Endothelial cell of umbilical vein (primary cell): ENCODE measurements at regions of chr20 and their contacts with region 1.

Region 1: DNA sequence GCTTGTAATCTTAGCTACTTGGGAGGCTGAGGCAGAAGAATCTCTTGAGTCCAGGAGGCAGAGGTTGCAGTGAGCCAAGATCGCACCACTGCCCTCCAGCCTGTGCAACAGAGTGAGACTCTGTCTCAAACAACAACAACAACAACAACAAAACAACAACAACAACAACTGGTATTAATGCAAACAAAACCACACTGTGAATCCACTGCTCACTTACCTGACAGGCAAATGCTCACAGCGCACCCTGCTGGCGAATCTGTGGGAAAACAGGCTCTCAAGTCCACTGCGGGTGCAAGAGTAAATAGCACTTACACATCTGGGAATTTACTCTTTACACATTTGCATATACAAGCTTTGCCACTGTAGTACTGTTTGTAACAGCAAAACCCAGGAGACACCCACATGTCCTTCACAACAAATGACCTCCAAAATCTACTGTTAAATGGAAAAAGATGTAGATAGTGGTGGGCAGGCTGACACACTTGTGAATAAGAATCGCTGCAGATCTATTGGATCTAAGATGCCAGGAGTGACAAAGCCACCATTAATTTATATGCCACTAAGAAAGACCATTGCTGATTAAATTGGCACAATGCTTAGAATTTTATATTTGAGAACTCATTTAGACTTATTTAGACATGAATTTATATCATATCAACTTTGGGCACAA is 29.3 kb downstream of the NSFL1C start:
- DNase-seq: peak; percentile 80
- H3K4me3 ChIP-seq: no peak overlapping the region
- H3K27ac ChIP-seq: no peak overlapping the region
- H3K4me1 ChIP-seq: peaks cover 18% of the 10 kb centered on the region
- H3K27me3 ChIP-seq: no peaks in the 10 kb centered on the region
- CTCF ChIP-seq: peak; percentile 82 to 85
- POLR2A ChIP-seq: no peak

Region 2: GRCh38 chr20:1062334-1063010 is 374.9 kb before region 1 on chr20:
- CTCF ChIA-PET with region 1: no interaction called
- POLR2A ChIA-PET with region 1: no interaction called
- dilution Hi-C with region 1: no loop called
- intact Hi-C with region 1: no loop called
- DNase-seq: no peak
- H3K4me3 ChIP-seq: no peak overlapping the region
- H3K27ac ChIP-seq: no peak overlapping the region
- H3K4me1 ChIP-seq: no peaks in the 10 kb centered on the region
- H3K27me3 ChIP-seq: peaks cover 2 to 3% of the 10 kb centered on the region in 2 experiments
- CTCF ChIP-seq: no peak
- POLR2A ChIP-seq: no peak

Region 3: DNA sequence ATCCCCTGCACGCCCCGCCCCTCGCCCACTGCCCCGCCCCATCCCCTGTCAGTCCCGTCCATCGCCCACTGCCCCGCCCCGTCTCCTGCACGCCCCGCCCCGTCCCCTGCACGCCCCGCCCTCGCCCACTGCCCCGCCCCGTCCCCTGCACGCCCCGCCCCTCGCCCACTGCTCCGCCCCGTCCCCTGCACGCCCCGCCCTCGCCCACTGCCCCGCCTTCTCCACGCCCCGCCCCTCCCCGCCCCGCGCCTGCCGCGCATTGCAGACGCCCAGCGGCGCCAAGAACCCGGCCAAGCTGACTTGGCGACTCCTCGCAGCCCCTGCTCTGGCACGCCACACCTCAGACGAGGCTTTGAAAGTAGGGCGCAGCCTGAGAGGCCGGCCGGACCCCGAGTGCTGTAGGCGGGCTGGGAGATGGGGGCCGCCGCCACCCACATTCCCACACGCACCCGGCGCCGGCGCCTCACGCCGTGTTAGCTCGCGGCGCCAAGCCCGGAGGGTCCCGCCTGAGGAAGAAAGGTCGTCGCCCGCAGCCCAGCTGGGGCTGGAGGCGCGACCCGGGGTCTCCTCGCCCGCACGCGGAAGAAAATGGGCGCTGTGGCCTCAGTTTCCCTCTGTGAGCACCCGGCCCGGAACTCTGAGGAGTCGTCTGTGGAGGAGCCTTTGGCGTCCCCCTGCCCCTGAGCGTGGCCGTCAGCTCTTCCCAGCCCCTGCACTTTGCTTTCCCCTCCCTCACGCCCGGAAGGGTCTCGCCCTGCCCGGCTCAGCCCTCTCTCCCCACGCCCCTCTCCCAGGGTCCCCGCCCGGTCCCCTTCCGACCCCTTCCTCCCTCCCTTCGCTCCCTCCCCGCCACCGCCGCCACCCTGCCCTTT is 211.4 kb before region 1 on chr20 and contains the start of gene RAD21L1:
- CTCF ChIA-PET with region 1: interaction called, 4 read pairs
- POLR2A ChIA-PET with region 1: no interaction called
- dilution Hi-C with region 1: no loop called
- intact Hi-C with region 1: loop called (anchors 1 kb)
- DNase-seq: peak; percentile 50
- H3K4me3 ChIP-seq: peak within 1 kb of the TSS; percentile 70 to 90 (median 71)
- H3K27ac ChIP-seq: peak within 1 kb of the TSS; percentile 70
- H3K4me1 ChIP-seq: peaks cover 6% of the 10 kb centered on the region
- H3K27me3 ChIP-seq: peaks cover 0 to 23% of the 10 kb centered on the region in 2 experiments
- CTCF ChIP-seq: no peak
- POLR2A ChIP-seq: no peak
- total RNA-seq, gene RAD21L1: not detected in 2 replicates

Region 4: GRCh38 chr20:1325173-1326030 is 112.0 kb before region 1 on chr20:
- CTCF ChIA-PET with region 1: interaction called, 21 read pairs
- POLR2A ChIA-PET with region 1: no interaction called
- dilution Hi-C with region 1: loop called (anchors 25 kb)
- intact Hi-C with region 1: loop called (anchors 2 kb)
- DNase-seq: peak; percentile 97
- H3K4me3 ChIP-seq: peak overlapping the region; percentile 34 to 68 (median 67)
- H3K27ac ChIP-seq: peak overlapping the region; percentile 99
- H3K4me1 ChIP-seq: peaks cover 76% of the 10 kb centered on the region
- H3K27me3 ChIP-seq: no peaks in the 10 kb centered on the region
- CTCF ChIP-seq: peak in 1 of 2 donors; percentile 29
- POLR2A ChIP-seq: peak; percentile 86

Region 5: DNA sequence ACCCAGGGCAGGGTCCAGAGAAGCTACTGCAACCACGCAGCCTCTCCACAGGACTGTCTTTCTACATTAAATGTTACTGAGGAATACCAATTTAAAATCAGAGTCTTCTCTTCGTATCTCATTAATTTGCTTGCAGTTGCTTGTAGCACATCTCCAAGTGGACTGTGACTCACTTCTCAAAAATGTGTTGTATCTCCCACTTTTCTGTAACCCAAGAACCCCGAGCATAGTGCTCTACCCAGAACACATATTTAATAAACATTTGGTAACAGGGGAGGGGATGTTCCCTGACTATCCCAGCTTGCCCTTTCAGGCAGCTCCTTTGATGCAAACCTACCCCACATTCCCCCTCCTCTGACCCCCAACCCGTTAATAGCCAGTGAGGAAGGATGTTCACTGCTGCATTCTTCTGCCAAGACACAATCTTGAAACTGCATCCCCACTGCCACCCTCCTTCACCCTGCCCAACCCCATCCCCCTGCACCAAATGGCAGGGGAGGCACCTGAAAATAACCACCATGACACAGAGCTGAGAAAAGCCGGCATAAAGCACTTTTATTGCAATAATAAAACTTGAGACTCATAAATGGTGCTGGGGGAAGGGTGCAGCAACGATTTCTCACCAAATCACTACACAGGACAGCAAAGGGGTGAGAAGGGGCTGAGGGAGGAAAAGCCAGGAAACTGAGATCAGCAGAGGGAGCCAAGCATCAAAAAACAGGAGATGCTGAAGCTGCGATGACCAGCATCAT is 68.7 kb before region 1 on chr20:
- CTCF ChIA-PET with region 1: interaction called, 22 read pairs
- POLR2A ChIA-PET with region 1: no interaction called
- dilution Hi-C with region 1: no loop called
- intact Hi-C with region 1: loop called (anchors 1 kb)
- DNase-seq: no peak
- H3K4me3 ChIP-seq: no peak overlapping the region
- H3K27ac ChIP-seq: no peak overlapping the region
- H3K4me1 ChIP-seq: peaks cover 42% of the 10 kb centered on the region
- H3K27me3 ChIP-seq: no peaks in the 10 kb centered on the region
- CTCF ChIP-seq: no peak
- POLR2A ChIP-seq: peak; percentile 46

Region 6: DNA sequence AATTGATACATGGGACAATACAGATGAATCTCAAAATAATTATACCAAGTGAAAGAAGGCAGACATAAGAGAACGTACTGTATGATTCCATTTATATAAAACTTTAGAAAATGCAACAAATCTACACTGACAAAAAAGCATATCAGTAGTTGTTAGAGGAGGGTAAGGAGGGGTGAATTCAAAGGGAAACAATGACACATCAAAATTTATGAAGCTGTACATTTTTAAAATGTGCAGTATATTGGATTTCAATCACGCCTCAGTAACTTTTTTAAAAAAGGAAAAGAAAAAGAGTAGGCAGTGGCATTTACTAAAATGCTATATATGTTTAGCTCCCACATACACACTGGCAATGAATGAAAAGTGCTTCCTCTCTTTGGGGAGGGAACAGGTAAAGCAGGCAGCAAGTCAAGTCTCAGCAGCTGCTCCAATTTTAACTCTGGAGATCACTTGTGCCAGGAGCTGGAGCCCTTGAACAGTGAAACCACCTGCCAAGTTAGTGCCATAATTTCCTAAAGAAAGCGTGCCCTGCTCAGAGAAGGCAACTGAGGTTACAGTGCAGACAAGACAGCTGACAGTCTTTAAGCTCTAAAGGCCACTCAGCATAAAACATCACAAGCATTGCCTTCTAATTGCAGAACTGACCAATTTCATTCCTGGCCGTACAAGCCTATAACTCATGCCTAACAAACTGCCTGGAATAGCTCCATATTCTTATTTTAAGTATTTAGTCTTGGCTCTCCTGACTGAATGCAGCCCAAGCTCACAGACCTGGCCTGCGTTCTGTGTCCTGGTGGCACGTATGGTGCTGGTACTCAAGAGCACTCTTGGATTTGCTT is 55.4 kb before region 1 on chr20:
- CTCF ChIA-PET with region 1: interaction called, 55 read pairs
- POLR2A ChIA-PET with region 1: interaction called, 3 read pairs
- dilution Hi-C with region 1: no loop called
- intact Hi-C with region 1: no loop called
- DNase-seq: no peak
- H3K4me3 ChIP-seq: no peak overlapping the region
- H3K27ac ChIP-seq: peak overlapping the region; percentile 9
- H3K4me1 ChIP-seq: peaks cover 95% of the 10 kb centered on the region
- H3K27me3 ChIP-seq: no peaks in the 10 kb centered on the region
- CTCF ChIP-seq: no peak
- POLR2A ChIP-seq: peak; percentile 48

Region 7: GRCh38 chr20:1415667-1416468 is 21.5 kb before region 1 on chr20:
- CTCF ChIA-PET with region 1: interaction called, 5 read pairs
- POLR2A ChIA-PET with region 1: no interaction called
- dilution Hi-C with region 1: no loop called
- intact Hi-C with region 1: loop called (anchors 1 kb)
- DNase-seq: peak; percentile 80
- H3K4me3 ChIP-seq: no peak overlapping the region
- H3K27ac ChIP-seq: peak overlapping the region; percentile 63
- H3K4me1 ChIP-seq: peaks cover 31% of the 10 kb centered on the region
- H3K27me3 ChIP-seq: no peaks in the 10 kb centered on the region
- CTCF ChIP-seq: no peak
- POLR2A ChIP-seq: no peak

Region 8: GRCh38 chr20:2767768-2768631 is 1330.6 kb after region 1 on chr20:
- CTCF ChIA-PET with region 1: no interaction called
- POLR2A ChIA-PET with region 1: no interaction called
- dilution Hi-C with region 1: no loop called
- intact Hi-C with region 1: no loop called
- DNase-seq: peak; percentile 54
- H3K4me3 ChIP-seq: no peak overlapping the region
- H3K27ac ChIP-seq: no peak overlapping the region
- H3K4me1 ChIP-seq: peaks cover 11% of the 10 kb centered on the region
- H3K27me3 ChIP-seq: peaks cover 0 to 1% of the 10 kb centered on the region in 2 experiments
- CTCF ChIP-seq: no peak
- POLR2A ChIP-seq: no peak